ENCODE measurements at regions of chr1 and their contacts with region 1.

Region 1: DNA sequence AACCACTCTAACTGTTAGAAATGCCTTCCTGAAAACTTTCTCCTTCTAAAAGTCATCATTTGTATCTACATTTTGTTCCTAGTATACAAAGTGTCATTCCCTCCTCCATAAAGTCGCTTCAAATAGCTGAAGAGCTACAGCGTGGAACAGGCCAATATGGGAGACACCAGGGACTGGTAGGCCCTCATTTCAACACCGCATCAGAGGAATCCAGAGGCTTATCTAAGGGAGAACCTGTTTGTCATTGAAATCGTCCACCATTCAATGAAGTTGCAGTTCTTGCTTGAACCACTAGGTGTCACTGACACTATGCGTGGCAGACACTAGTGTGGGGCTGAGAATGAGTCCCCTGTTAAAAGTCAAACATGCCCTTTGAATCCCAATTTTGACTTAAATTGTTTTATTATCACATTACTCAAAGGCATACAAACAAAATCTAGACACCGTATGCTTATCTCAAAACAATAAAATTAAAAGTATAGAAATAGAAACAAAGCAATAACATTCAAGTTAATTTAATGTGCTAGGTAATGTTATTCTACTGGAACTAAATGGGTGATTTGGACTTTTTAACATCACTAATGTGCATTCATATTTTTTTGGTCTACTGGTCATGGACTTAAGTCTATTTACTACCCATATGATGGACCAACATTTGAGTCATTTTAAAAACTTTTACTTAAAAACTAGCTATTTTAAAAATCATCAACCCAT is 182.3 kb downstream of the FCRL5 start:
- DNase-seq: peak; percentile 86 to 88
- H3K4me3 ChIP-seq: no peak overlapping the region
- H3K4me3 Mint-ChIP-seq: peak overlapping the region; percentile 37
- H3K27ac Mint-ChIP-seq: peak overlapping the region; percentile 76
- H3K4me1 ChIP-seq: peaks cover 34% of the 10 kb centered on the region
- H3K4me1 Mint-ChIP-seq: peaks cover 53% of the 10 kb centered on the region
- H3K27me3 ChIP-seq: no peaks in the 10 kb centered on the region
- H3K27me3 Mint-ChIP-seq: no peaks in the 10 kb centered on the region
- CTCF ChIP-seq: peak; percentile 79 to 86

Region 2: DNA sequence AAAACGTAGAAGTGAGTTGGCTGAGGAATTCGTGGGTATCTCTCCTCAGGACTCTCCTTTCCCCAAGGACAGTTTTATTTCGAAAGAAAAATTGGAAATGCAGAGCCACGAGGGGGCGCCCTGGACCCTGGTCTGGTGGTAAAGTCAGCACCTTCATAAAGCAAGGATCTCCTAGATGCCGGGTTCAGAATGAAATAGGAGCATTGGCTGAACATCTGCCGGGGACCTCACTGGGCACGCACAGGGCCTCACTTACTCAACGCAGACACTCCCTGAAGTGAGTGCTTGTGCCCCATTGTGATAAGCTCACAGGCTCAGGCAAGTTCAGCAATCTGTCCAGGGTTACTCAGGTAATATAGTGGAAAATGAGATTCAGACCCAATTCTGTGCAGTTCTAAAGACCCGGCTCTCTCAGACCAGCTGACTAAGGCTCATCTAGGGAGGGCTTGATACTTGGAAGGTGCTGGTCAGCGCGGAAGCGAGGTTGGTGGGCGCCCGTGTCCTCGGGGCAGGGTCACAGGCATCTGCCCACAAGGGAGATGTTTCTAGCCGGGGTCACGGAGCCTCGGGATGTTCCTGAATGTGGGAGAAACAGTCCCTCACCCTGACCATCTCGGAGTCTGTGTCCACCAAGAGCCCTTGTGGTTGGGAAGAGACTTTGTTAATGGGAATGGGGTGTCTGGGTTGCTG is 176.1 kb before region 1 on chr1:
- CTCF ChIA-PET with region 1: no interaction called
- POLR2A ChIA-PET with region 1: no interaction called
- intact Hi-C with region 1: loop called (anchors 1 kb)
- DNase-seq: peak; percentile 80 to 85
- H3K4me3 ChIP-seq: no peak overlapping the region
- H3K4me3 Mint-ChIP-seq: no peak overlapping the region
- H3K27ac Mint-ChIP-seq: no peak overlapping the region
- H3K4me1 ChIP-seq: peaks cover 8% of the 10 kb centered on the region; the same call in 1 of the 2 replicates
- H3K4me1 Mint-ChIP-seq: no peaks in the 10 kb centered on the region
- H3K27me3 ChIP-seq: no peaks in the 10 kb centered on the region
- H3K27me3 Mint-ChIP-seq: no peaks in the 10 kb centered on the region
- CTCF ChIP-seq: peak; percentile 79 to 84

Region 3: GRCh38 chr1:157262422-157262821 is 107.5 kb before region 1 on chr1:
- CTCF ChIA-PET with region 1: no interaction called
- POLR2A ChIA-PET with region 1: no interaction called
- intact Hi-C with region 1: no loop called
- DNase-seq: no peak
- H3K4me3 ChIP-seq: no peak overlapping the region
- H3K4me3 Mint-ChIP-seq: no peak overlapping the region
- H3K27ac Mint-ChIP-seq: no peak overlapping the region
- H3K4me1 ChIP-seq: no peaks in the 10 kb centered on the region
- H3K4me1 Mint-ChIP-seq: no peaks in the 10 kb centered on the region
- H3K27me3 ChIP-seq: no peaks in the 10 kb centered on the region
- H3K27me3 Mint-ChIP-seq: no peaks in the 10 kb centered on the region
- CTCF ChIP-seq: no peak

Region 4: DNA sequence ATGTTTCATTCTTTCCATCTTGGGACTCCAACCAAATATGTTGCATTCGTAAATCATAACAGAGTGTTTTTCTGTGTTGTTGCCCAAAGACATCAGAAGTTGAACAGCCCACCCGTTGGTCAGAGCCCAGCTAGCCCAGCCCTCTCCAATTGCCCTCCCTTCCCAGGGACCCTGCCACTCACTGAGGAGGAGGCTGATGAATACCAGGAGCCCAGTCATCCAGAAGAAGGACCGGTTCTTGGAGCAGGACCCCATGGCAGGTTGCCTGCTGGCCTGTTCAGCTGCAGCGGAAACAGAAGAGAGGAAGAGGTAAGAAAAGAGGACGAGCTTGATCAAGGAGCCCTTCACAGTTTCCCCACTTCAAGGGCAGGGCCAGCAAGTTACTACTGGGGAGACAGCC is 59.6 kb before region 1 on chr1:
- CTCF ChIA-PET with region 1: interaction called, 3 read pairs
- POLR2A ChIA-PET with region 1: no interaction called
- intact Hi-C with region 1: loop called (anchors 1 kb)
- DNase-seq: no peak
- H3K4me3 ChIP-seq: no peak overlapping the region
- H3K4me3 Mint-ChIP-seq: no peak overlapping the region
- H3K27ac Mint-ChIP-seq: no peak overlapping the region
- H3K4me1 ChIP-seq: no peaks in the 10 kb centered on the region; the same call in 1 of the 2 replicates
- H3K4me1 Mint-ChIP-seq: peaks cover 12% of the 10 kb centered on the region
- H3K27me3 ChIP-seq: no peaks in the 10 kb centered on the region
- H3K27me3 Mint-ChIP-seq: no peaks in the 10 kb centered on the region
- CTCF ChIP-seq: no peak

Region 5: DNA sequence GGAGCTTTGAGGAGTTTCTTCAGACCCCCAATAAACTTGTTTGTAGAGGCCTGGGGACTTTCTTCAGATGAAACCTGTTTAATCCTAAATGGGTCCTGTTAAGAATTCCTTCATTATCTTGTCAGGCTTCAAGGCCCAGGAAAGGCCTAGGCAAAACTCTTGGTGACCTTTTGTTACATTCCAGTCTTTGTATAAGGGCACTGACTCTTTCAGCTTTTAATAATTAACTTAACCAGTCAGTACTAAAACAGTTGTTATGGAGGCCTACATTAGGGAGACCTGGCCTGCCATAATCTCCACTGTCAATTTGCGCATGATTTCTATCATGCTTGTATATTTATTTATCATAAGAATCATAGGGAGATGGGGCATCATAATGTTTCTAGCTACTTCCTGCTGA is 72.1 kb after region 1 on chr1:
- CTCF ChIA-PET with region 1: no interaction called
- POLR2A ChIA-PET with region 1: no interaction called
- intact Hi-C with region 1: loop called (anchors 1 kb)
- DNase-seq: peak; percentile 72 to 75
- H3K4me3 ChIP-seq: no peak overlapping the region
- H3K4me3 Mint-ChIP-seq: peak overlapping the region; percentile 48
- H3K27ac Mint-ChIP-seq: peak overlapping the region; percentile 79
- H3K4me1 ChIP-seq: peaks cover 51% of the 10 kb centered on the region
- H3K4me1 Mint-ChIP-seq: peaks cover 24% of the 10 kb centered on the region
- H3K27me3 ChIP-seq: no peaks in the 10 kb centered on the region
- H3K27me3 Mint-ChIP-seq: no peaks in the 10 kb centered on the region
- CTCF ChIP-seq: no peak

Region 6: DNA sequence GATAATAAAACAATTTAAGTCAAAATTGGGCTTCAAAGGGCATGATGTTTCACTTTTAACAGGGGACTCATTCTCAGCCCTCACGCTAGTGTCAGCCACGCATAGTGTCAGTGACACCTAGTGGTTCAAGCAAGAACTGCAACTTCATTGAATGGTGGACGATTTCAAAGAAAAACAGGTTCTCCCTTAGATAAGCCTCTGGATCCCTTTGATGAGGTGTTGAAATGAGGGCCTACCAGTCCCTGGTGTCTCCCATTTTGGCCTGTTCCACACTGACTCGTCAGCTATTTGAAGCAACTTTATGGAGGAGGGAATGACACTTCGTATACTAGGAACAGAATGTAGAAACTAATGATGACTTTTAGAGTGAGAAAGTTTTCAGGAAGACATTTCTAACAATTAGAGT is 126.2 kb after region 1 on chr1:
- CTCF ChIA-PET with region 1: no interaction called
- POLR2A ChIA-PET with region 1: no interaction called
- intact Hi-C with region 1: loop called (anchors 2 kb)
- DNase-seq: peak; percentile 64 to 79
- H3K4me3 ChIP-seq: no peak overlapping the region
- H3K4me3 Mint-ChIP-seq: no peak overlapping the region
- H3K27ac Mint-ChIP-seq: peak overlapping the region; percentile 75
- H3K4me1 ChIP-seq: peaks cover 40% of the 10 kb centered on the region
- H3K4me1 Mint-ChIP-seq: peaks cover 44% of the 10 kb centered on the region
- H3K27me3 ChIP-seq: no peaks in the 10 kb centered on the region
- H3K27me3 Mint-ChIP-seq: no peaks in the 10 kb centered on the region
- CTCF ChIP-seq: peak; percentile 71 to 80

Region 7: DNA sequence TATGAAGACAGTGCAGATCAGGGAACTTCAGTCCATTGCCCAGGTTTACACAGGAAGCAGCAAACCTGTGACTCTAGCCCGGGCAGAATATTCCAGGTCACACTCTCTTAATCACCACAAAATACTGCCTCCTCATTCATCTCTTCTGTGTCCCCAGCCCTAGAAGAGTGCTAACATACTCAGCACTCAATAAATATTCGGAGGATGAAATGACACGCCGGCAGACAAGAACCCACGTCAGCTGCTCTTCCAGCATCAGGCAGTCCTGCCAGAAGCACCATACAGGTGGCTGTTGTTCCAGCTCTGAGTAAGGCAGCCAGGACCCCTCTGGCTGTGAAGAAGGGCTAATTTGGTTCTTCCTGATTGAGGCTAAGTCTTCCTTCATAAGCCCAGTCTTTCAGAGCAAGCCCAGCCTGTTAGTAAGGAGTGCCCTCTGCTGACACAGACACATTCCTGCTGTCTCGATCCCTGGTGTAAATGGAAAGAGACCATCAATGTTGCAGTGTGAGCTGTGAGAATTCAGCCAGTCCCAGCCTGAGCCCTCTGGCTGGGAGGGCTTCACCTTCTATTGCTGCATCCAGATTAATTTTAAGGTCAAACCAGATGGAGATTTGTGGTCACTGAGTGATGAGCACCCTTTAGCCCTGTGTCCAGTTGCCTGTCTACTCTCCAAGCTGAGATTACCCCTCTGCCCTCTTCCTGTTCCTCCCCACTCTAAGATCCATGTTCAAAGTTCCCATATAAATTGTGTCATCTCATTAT is 578.5 kb after region 1 on chr1:
- CTCF ChIA-PET with region 1: no interaction called
- POLR2A ChIA-PET with region 1: no interaction called
- intact Hi-C with region 1: loop called (anchors 10 kb)
- DNase-seq: peak; percentile 52 to 61
- H3K4me3 ChIP-seq: no peak overlapping the region
- H3K4me3 Mint-ChIP-seq: no peak overlapping the region
- H3K27ac Mint-ChIP-seq: no peak overlapping the region
- H3K4me1 ChIP-seq: peaks cover 34% of the 10 kb centered on the region
- H3K4me1 Mint-ChIP-seq: peaks cover 20% of the 10 kb centered on the region
- H3K27me3 ChIP-seq: no peaks in the 10 kb centered on the region
- H3K27me3 Mint-ChIP-seq: no peaks in the 10 kb centered on the region
- CTCF ChIP-seq: peak; percentile 62 to 90